ENCODE measurements at regions of chr5 and their contacts with region 1.

Region 1: DNA sequence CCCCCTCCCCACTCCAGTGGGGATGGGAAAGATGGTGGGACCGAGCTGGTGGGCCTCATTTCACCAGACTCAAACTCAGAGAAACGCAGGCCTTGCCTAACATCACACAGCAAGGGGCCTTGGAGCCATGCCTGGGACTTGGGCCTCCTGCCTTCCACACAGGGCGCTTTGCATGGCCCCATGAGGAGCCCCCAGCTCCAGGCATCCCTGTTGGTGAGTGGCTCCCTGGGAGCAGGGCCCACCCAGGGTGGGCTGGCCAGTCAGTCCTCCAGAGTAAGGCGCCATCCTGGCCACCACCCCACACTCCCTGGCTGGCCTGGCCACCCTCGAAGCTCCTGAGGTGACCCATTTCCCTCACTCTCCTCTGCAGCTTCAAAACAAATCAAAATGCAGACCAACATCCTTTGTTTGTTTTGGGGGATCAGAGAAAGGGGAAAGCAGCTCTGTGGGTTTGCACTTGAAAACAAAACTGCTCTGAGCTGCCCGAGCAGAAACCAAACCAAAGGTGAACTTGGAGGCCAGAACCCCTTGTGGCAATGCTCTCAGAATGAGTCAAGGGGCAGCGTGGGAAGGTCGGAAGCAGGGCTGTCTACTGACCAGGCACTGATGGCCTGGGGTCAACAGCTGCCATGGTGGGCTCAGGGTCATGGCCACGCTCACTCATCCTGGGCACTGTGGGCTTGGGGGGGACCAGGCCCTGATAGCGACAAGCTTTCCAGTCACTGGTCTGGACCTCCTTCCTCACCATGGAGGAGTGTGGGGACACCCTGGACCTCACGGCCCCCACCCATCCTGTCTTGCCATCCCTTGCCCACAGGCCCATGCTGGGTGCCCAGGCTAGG is 37.0 kb upstream of the VDAC1 start:
- DNase-seq: no peak
- ATAC-seq: no peak
- H3K4me3 ChIP-seq: no peak overlapping the region
- H3K27ac ChIP-seq: no peak overlapping the region
- H3K4me1 ChIP-seq: no peaks in the 10 kb centered on the region
- CTCF ChIP-seq: no peak
- EP300 ChIP-seq: no peak
- POLR2A ChIP-seq: no peak
- RAD21 ChIP-seq: no peak

Region 2: DNA sequence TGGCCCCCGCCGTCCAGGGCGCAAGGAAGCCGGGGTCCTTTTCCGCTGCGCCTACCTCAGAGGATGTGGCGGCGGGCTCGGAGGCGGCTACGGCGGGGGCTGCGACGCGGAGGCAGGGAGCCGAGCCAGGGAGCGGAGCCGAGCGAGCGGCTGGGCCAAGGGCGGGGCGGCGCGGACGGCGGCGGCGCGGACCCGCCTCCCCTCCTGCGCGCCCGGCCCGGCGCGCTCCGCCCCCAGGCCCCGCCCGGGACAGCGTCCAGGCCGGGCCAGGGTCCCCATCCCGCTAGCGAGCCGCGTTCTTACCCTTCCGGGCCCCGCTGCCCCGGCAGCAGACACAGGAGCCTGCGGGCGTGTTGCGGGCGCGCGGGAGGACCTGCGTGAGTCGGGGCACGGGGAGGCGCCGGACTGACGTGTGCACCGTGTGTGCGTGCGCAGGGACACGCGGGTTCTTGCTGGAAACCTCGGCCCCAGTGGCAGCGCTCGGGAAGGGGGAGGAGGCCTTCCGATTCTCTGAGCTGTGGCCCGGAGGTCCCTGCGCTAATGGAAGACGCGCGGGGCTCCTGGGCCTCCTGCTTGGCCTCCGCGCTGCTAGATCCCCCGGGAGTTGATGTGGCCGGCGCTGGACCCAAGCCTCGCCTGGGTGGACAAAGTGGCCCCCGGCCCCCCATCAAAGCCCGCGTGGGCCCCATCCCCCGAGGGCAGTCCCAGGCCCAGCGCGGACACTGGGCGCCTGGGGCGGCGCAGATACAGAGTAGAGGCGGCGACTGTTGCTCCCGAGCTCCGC is 37.0 kb before region 1 on chr5 and contains the start of gene VDAC1:
- CTCF ChIA-PET with region 1: interaction called, 36 read pairs
- POLR2A ChIA-PET with region 1: interaction called, 9 read pairs
- DNase-seq: peak; percentile 85 to 88
- ATAC-seq: peak; percentile 83 to 85
- H3K4me3 ChIP-seq: peak within 1 kb of the TSS; percentile 90
- H3K27ac ChIP-seq: peak within 1 kb of the TSS; percentile 98
- H3K4me1 ChIP-seq: peaks cover 56% of the 10 kb centered on the region
- CTCF ChIP-seq: no peak
- EP300 ChIP-seq: no peak
- POLR2A ChIP-seq: peak; percentile 84
- RAD21 ChIP-seq: no peak
- polyA plus RNA-seq, gene VDAC1: 300 and 369 TPM in 2 replicates

Region 3: GRCh38 chr5:134063188-134063820 is 21.5 kb after region 1 on chr5:
- CTCF ChIA-PET with region 1: interaction called, 106 read pairs
- POLR2A ChIA-PET with region 1: interaction called, 3 read pairs
- DNase-seq: peak in 1 of 2 experiments; percentile 21
- ATAC-seq: peak; percentile 17 to 24; a peak in 2 of 6 replicates
- H3K4me3 ChIP-seq: no peak overlapping the region
- H3K27ac ChIP-seq: no peak overlapping the region
- H3K4me1 ChIP-seq: peaks cover 21% of the 10 kb centered on the region
- CTCF ChIP-seq: no peak
- EP300 ChIP-seq: no peak
- POLR2A ChIP-seq: no peak
- RAD21 ChIP-seq: no peak

Region 4: GRCh38 chr5:134113902-134114875 is 72.4 kb after region 1 on chr5 and contains the start of gene TCF7:
- CTCF ChIA-PET with region 1: interaction called, 62 read pairs
- POLR2A ChIA-PET with region 1: no interaction called
- DNase-seq: peak; percentile 76 to 91
- ATAC-seq: peak; percentile 83 to 94
- H3K4me3 ChIP-seq: peak within 1 kb of the TSS; percentile 82
- H3K27ac ChIP-seq: peak within 1 kb of the TSS; percentile 69 to 87
- H3K4me1 ChIP-seq: peaks cover 4% of the 10 kb centered on the region; the same call in 1 of the 3 replicates
- CTCF ChIP-seq: no peak
- EP300 ChIP-seq: no peak
- POLR2A ChIP-seq: peak; percentile 58
- RAD21 ChIP-seq: no peak
- polyA plus RNA-seq, gene TCF7: 2.8 and 3.7 TPM in 2 replicates

Region 5: DNA sequence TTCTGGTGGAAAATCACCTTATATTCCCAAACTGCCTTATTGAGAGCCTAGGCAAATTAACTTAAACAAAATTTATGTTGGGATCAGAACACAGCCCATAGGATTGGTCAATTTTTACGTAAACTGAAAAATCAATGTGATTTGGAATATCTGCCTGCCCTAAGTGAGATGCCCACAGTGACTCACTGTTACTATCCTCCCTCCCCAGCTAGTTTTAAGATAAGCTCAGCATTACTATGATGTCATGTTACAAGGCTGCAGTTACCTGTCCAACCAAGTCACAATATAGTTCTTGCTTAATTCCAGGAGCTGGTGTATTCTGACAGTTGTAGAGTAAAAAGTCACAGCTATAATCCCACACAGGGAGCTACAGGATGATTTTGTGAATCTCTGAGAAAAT is 111.9 kb after region 1 on chr5:
- CTCF ChIA-PET with region 1: interaction called, 546 read pairs
- POLR2A ChIA-PET with region 1: no interaction called
- DNase-seq: no peak
- ATAC-seq: no peak
- H3K4me3 ChIP-seq: no peak overlapping the region
- H3K27ac ChIP-seq: no peak overlapping the region
- H3K4me1 ChIP-seq: no peaks in the 10 kb centered on the region
- CTCF ChIP-seq: no peak
- EP300 ChIP-seq: no peak
- POLR2A ChIP-seq: no peak
- RAD21 ChIP-seq: no peak

Region 6: GRCh38 chr5:134533115-134533815 is 491.5 kb after region 1 on chr5:
- CTCF ChIA-PET with region 1: no interaction called
- POLR2A ChIA-PET with region 1: no interaction called
- DNase-seq: no peak
- ATAC-seq: no peak
- H3K4me3 ChIP-seq: no peak overlapping the region
- H3K27ac ChIP-seq: no peak overlapping the region
- H3K4me1 ChIP-seq: peaks cover 43% of the 10 kb centered on the region
- CTCF ChIP-seq: no peak
- EP300 ChIP-seq: no peak
- POLR2A ChIP-seq: no peak
- RAD21 ChIP-seq: no peak

Measured in A549 (cell line).